ENCODE measurements at regions of chrX and their contacts with region 1.

Region 1: DNA sequence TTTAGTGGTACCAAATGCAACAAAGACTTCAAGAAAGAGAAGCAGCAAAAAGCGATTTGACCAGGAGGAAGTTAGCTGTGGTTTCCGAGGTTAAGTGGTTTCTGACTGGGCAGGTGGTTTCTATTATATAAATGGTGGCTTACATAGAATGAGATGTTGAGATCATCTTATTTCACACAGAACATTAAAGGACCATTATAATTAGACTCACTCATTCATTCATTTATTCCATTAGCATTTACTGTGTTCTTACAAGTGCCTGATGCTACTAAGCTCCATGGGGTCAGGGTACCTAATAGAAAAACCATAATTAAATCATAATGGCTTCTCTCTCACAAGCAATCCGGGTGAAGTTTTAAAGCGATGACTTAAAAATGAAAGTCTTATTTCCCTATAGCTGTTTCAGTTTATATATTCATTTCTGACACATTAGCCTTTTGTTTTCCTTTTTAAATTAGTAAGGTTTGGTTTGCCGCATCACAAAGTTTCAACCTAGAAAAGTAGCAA is 10.6 kb downstream of the TSPAN6 start:
- DNase-seq: no peak
- H3K4me3 ChIP-seq: no peak overlapping the region
- CTCF ChIP-seq: no peak

Region 2: GRCh38 chrX:100615005-100615404 is 11.0 kb before region 1 on chrX:
- CTCF ChIA-PET with region 1: interaction called, 11 read pairs
- POLR2A ChIA-PET with region 1: no interaction called
- DNase-seq: no peak
- H3K4me3 ChIP-seq: no peak overlapping the region
- CTCF ChIP-seq: peak; percentile 52

Region 3: DNA sequence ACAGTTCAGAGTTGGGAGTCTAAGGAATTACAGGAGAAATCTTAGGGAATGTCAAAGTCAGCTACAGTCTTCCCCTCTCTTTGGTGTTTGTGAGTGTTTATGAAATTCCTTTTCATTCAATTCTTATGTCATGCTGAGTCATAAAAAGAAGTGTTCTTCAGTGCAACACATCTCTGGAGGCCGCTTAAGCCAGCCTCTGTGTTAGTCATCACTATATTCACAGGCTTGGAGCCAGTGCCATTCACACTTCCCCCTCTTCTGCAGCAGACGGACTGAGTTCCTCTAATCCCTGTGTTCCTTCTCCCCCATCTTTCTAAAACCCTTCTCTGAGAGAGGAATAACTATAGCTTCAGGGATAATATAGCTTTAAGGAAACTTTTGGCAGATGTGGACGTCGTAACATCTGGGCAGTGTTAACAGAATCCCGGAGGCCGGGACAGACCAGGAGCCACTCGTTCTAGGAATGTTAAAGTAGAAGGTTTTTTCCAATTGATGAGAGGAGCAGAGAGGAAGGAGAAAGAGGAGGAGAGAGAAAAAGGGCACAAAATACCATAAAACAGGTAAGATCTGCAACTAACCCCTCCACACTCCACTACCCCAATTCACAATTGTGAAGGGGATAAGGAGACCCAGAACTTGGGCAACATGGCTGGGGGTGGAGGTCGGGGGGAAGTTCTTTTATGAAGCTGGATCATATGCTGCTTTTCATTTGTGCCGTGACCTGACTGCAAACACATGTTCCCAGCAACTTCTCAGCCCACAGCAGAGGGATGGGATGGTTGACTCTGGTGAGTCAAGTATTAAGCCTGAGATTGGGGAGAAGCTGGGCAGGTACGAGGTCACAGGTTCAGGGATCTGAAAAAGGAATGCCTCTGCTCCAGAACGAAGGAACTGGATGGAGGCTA is 18.2 kb after region 1 on chrX and contains the start of gene SRPX2:
- CTCF ChIA-PET with region 1: no interaction called
- POLR2A ChIA-PET with region 1: no interaction called
- DNase-seq: peak; percentile 73
- H3K4me3 ChIP-seq: peak within 1 kb of the TSS; percentile 53
- CTCF ChIP-seq: no peak

Region 4: DNA sequence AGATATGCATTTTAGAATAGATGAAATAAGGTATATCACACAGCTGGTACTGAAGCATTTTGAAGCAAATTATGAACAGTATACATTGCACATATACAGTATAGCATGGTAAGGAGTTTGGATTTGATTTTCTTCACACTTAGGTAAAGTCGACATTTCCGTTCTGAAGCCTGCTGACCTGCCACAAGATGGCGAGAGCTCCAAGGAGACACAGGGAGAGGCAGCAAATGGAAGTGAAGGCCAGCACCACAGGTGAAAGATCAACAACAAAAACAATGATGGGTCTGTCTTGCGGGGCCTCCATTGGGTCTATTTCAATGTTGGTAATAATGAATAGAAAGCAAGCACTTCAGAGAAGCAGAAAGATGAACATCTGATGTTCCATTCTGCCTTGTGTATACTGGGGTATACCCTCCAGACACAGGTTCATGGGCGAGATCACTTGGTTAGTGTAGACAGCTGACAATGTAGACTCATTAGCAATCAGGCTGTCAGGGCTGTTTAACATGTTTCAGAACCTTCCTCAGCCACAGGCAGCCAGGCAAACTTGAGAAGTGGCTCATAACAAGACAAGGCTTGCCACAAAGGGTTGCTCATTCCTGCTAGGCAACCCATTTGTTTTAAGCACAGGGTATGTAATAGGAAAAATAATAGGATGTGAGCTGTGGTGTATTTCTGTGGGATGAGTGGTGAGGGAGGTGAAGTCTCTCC is 269.5 kb after region 1 on chrX:
- CTCF ChIA-PET with region 1: no interaction called
- POLR2A ChIA-PET with region 1: no interaction called
- DNase-seq: no peak
- H3K4me3 ChIP-seq: no peak overlapping the region
- CTCF ChIP-seq: peak; percentile 56

Measured in AG04449 (cell line).